ENCODE measurements at regions of chr12 and their contacts with region 1.

Region 1: GRCh38 chr12:132414634-132415326 is 75.2 kb upstream of the FBRSL1 start:
- DNase-seq: peak; percentile 87
- ATAC-seq: peak; percentile 93
- H3K4me3 Mint-ChIP-seq: no peak overlapping the region
- H3K27ac Mint-ChIP-seq: no peak overlapping the region
- H3K4me1 Mint-ChIP-seq: no peaks in the 10 kb centered on the region
- H3K27me3 Mint-ChIP-seq: peaks cover 40% of the 10 kb centered on the region
- CTCF ChIP-seq: peak; percentile 78

Region 2: GRCh38 chr12:132153501-132154340 is 261.1 kb before region 1 on chr12:
- CTCF ChIA-PET with region 1: interaction called, 37 read pairs
- POLR2A ChIA-PET with region 1: interaction called, 4 read pairs
- DNase-seq: peak; percentile 88
- ATAC-seq: peak; percentile 98
- H3K4me3 Mint-ChIP-seq: no peak overlapping the region
- H3K27ac Mint-ChIP-seq: no peak overlapping the region
- H3K4me1 Mint-ChIP-seq: no peaks in the 10 kb centered on the region
- H3K27me3 Mint-ChIP-seq: no peaks in the 10 kb centered on the region
- CTCF ChIP-seq: peak; percentile 83

Region 3: GRCh38 chr12:132264086-132265010 is 150.4 kb before region 1 on chr12:
- CTCF ChIA-PET with region 1: interaction called, 13 read pairs
- POLR2A ChIA-PET with region 1: no interaction called
- DNase-seq: no peak
- ATAC-seq: peak; percentile 68
- H3K4me3 Mint-ChIP-seq: no peak overlapping the region
- H3K27ac Mint-ChIP-seq: no peak overlapping the region
- H3K4me1 Mint-ChIP-seq: no peaks in the 10 kb centered on the region
- H3K27me3 Mint-ChIP-seq: peaks cover 32% of the 10 kb centered on the region
- CTCF ChIP-seq: no peak

Region 4: DNA sequence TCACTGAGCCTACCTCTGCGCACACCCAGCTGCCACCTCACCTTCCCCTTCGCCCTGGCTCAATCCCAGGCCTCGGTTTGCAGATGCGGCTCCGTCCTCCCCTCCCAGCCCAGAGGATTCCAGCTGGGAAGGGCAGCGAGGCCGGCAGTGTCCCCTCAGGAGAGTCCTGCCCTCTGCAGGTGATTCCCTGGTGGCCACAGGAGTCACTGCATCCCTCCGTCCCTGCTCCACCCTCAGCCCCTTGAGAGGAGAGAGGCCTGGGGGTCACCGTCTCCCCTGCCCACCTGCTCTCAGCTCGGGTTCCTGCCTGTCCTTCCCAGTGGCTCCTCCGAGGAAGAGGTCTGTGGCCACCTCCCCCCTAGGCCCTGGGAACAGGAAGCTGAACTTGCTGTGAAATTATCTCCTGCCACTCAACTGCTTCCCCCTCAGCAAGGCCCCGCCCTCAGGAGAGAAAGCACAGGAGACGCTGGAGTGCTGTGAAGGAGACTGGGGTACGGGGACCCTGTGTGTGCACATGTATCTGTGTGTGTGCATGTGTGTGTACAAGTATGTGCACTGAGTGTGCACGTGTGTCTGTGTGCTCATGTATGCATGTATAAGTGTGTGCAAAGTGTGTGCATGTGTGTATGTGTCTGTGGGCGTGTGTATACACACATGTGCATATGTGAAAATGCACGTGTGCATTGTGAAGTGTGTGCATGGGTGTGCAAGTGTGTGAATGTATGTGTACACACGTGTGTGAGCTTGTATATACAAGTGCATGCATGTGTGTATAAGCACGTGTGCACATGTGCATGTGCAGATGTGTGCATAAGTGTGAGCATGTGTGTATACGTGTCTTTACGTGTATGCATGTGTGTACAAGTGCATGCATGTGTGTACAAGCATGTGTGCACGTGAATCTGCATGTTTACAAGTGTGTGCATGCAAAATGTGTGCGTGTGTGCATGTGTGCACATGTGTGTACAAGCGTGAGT is 72.2 kb before region 1 on chr12:
- CTCF ChIA-PET with region 1: interaction called, 11 read pairs
- POLR2A ChIA-PET with region 1: no interaction called
- DNase-seq: peak; percentile 68
- ATAC-seq: peak; percentile 89
- H3K4me3 Mint-ChIP-seq: no peak overlapping the region
- H3K27ac Mint-ChIP-seq: peak overlapping the region; percentile 65; the same call in 1 of the 2 replicates
- H3K4me1 Mint-ChIP-seq: no peaks in the 10 kb centered on the region
- H3K27me3 Mint-ChIP-seq: peaks cover 37% of the 10 kb centered on the region
- CTCF ChIP-seq: peak; percentile 33; the same call in 1 of the 2 replicates

Region 5: DNA sequence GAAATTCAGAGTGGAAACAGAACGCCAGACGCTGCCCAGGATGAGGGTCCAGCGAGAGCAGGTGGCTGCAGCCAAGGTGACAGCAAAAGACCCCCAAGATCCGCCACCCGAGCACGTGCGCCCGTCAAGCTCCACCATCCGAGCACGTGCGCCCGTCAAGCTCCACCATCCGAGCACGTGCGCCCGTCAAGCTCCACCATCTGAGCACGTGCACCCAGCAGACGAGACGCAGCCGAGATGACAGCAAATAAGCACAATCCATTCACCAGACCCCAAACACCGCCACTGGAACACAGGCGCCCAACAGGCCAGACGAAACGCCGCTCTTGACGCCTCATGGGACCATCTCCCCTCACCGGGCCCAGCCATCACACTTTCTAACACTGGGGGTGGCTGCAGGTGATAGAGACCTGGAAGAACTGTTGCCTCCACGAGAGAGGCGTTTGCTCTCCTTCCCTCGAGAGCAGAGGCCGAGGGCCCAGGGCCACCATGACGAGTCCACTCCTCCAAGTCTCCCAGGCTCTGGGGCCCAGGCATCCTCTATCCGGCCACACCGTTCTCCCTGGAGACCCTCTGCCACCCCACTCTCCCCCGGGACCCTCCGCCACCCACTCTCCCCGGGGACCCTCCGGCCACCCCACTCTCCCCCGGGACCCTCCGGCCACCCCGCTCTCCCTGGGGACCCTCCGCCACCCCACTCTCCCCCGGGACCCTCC is 23.3 kb before region 1 on chr12:
- CTCF ChIA-PET with region 1: interaction called, 35 read pairs
- POLR2A ChIA-PET with region 1: no interaction called
- DNase-seq: no peak
- ATAC-seq: no peak
- H3K4me3 Mint-ChIP-seq: no peak overlapping the region
- H3K27ac Mint-ChIP-seq: no peak overlapping the region
- H3K4me1 Mint-ChIP-seq: peaks cover 19% of the 10 kb centered on the region
- H3K27me3 Mint-ChIP-seq: peaks cover 68% of the 10 kb centered on the region
- CTCF ChIP-seq: no peak

Region 6: DNA sequence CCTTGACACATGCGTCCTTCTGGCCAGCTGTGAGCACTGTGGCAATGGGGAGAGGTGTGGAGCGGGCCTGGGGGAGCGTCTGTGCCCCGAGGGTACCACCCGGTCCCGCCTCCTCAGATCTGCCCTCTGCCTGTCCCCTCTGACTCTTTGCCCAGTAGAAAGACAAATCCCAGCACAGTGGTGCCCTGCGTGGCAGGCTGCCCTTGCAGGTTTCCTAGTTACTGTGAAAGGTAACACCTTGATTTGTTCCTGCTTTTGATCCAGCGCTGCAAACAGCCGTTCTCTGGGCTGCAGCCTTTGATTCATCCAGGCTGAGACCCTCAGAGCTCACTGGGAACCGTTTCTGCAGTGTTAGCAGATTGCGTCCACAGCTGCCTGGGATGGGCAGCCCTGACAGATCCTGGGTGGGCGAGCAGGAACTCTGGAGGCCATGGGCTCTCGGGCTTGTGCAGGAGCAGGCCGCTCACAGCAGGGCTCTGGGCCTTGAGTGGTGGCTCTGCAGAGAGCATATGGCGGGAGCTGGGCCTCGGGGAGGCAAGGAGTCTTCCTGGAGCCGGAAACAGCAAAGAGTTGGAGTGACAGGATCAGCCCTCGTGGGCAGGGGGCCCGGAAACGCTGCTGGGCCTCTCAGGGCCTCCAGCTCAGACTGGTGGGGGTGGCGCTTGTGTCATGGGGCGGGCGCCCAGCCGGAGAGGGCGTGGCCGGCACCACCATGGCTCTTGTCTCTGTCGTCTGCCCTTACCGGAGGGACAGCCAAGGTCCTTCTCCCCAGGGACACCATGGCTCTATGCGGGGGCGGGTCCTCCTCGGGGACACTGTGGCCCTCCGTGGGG is 91.8 kb after region 1 on chr12:
- CTCF ChIA-PET with region 1: interaction called, 24 read pairs
- POLR2A ChIA-PET with region 1: no interaction called
- DNase-seq: no peak
- ATAC-seq: no peak
- H3K4me3 Mint-ChIP-seq: no peak overlapping the region
- H3K27ac Mint-ChIP-seq: peak overlapping the region; percentile 34; the same call in 1 of the 2 replicates
- H3K4me1 Mint-ChIP-seq: peaks cover 24% of the 10 kb centered on the region
- H3K27me3 Mint-ChIP-seq: no peaks in the 10 kb centered on the region
- CTCF ChIP-seq: no peak

Region 7: DNA sequence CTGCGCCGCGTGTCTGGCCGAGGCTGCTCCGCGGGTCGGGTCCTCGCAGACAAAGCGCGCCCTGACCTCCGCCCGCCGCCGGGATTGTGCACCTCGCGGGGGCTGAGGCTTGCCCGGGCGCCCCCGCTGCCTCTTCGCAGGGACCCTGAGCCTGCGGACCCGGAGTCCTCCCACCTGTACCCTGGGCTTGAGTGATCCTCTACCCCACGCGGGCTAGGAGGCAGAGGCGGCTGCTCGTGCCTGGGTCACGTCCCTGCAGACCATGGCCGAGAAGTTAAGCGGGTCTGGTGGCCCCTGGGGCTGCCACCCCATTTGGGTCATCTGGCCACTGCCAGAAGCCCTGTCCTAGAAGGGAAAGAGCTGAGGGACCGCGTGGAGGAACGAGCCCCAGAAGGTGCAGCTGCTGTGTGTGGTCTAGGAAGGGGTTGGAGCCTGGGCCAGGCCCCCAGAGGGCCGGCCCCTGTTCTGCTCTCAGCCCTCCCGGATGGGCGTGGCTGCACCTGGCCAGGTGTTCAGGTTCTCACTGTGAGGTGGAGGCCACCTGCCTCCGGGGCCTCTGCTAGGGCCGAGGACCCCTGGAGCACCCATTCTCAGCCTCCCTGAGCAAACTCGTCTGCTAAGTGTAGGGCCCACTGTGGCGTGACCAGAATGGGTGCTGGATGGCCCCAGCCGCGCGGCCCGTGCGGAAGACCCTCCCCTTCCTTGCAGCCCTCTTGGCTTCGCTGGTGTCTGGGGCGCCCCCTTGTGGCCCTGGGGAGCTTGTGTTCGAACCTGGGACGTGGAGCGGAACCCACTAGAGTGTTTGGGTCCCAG is 146.0 kb after region 1 on chr12:
- CTCF ChIA-PET with region 1: interaction called, 47 read pairs
- POLR2A ChIA-PET with region 1: no interaction called
- DNase-seq: peak; percentile 91
- ATAC-seq: peak; percentile 75
- H3K4me3 Mint-ChIP-seq: peak overlapping the region; percentile 79
- H3K27ac Mint-ChIP-seq: no peak overlapping the region
- H3K4me1 Mint-ChIP-seq: peaks cover 2% of the 10 kb centered on the region; the same call in 1 of the 2 replicates
- H3K27me3 Mint-ChIP-seq: peaks cover 35% of the 10 kb centered on the region
- CTCF ChIP-seq: peak; percentile 91

Measured in WTC11 (cell line).